HCT116 (cell line): ENCODE measurements at regions of chr3 and their contacts with region 1.

Region 1: DNA sequence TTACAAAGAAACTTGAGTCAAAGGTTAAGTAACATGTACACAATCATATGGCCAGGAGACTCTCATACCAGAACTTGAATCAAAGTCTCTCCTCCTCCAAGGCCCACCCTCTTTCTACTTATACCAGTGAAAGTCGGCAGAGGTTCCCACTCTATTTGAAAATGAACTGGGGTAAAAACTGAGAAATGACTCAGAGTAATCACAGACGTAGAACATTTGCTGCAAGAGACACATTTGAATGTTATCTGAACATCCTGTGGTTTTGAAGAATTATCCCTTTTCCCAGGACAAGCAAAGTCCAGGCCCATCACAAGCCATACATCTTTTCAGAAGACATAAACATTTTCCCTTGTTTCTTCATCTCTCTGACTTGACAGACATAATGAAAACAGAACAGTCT is 55.8 kb downstream of the SHOX2 start:
- DNase-seq: no peak
- ATAC-seq: no peak
- H3K4me3 ChIP-seq: no peak overlapping the region
- H3K27ac ChIP-seq: no peak overlapping the region
- H3K4me1 ChIP-seq: peaks cover 0 to 8% of the 10 kb centered on the region in 2 experiments; a peak in 1 of 4 replicates
- H3K27me3 ChIP-seq: no peaks in the 10 kb centered on the region
- CTCF ChIP-seq: no peak
- POLR2A ChIP-seq: no peak
- RAD21 ChIP-seq: no peak

Region 2: DNA sequence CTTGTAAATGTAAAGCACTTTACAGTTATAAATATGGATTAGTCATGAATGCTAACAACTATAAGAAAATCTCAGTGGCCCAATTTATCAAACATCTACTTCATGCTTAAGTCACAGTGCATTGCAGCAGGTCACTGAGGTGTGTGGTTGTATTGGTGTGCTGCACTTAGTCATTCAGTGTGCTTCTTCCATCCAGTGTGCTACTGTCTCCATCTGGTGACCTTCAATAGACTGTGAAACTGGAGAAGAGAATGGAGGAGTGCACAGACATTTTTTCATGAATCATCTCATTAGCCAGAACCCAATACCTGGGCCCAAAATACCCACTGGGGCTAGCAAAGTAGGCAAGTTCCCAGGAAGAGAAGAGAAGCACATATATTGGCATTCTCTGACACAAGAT is 143.8 kb before region 1 on chr3:
- CTCF ChIA-PET with region 1: no interaction called
- POLR2A ChIA-PET with region 1: no interaction called
- RAD21 ChIA-PET with region 1: no interaction called
- intact Hi-C with region 1: loop called (anchors 5 kb)
- DNase-seq: no peak
- ATAC-seq: no peak
- H3K4me3 ChIP-seq: no peak overlapping the region
- H3K27ac ChIP-seq: no peak overlapping the region
- H3K4me1 ChIP-seq: no peaks in the 10 kb centered on the region
- H3K27me3 ChIP-seq: no peaks in the 10 kb centered on the region
- CTCF ChIP-seq: peak in 2 of 3 experiments; percentile 20 to 24; a peak in 2 of 6 replicates
- POLR2A ChIP-seq: no peak
- RAD21 ChIP-seq: peak; percentile 48